Transverse colon (tissue), 4 donors: ENCODE measurements at regions of chr2 and their contacts with region 1.

Region 1: DNA sequence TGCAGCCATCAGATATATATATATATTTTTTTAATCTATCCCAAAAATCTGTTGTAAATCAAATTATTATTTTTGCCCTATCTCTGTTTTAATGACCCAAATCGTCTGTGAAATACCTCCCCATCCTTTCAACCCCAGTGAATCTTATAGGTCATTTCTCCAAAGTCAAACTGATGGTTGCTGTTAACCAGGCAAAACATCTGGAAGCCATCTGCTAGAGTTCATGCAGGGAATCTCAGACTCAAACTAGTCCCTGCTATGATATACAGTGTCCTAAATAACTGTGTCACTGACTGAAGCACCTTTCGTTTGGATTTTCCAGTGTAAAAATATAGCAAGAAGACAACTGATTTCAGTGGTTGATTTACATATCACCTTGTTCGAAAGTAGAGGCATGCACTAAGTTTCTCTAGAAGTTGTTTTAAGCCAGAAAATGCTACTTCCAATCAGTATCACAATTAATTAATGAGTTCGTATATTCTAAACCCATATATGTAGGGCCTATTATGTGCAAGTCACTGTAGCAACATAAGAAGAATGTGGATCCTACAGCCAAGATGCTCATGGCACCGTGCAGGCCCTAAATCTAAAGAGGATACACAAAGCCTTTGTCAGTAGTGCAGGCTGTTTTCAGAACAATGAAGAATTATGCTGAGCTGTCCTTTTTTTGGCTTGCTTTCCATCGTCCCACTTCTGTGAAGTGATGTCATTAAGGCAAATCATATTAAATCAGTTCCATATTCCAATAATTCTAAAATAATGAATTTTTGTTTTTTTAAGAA is 566.0 kb downstream of the STK39 start:
- DNase-seq: no peak
- H3K4me3 ChIP-seq: no peak overlapping the region
- H3K27ac ChIP-seq: no peak overlapping the region
- H3K4me1 ChIP-seq: no peaks in the 10 kb centered on the region
- H3K27me3 ChIP-seq: no peaks in the 10 kb centered on the region
- CTCF ChIP-seq: no peak
- EP300 ChIP-seq: no peak
- POLR2A ChIP-seq: no peak

Region 2: GRCh38 chr2:167697948-167698347 is 16.5 kb after region 1 on chr2:
- in situ Hi-C with region 1: no loop called
- intact Hi-C with region 1: loop called (anchors 2 kb)
- DNase-seq: no peak
- H3K4me3 ChIP-seq: no peak overlapping the region
- H3K27ac ChIP-seq: no peak overlapping the region
- H3K4me1 ChIP-seq: no peaks in the 10 kb centered on the region
- H3K27me3 ChIP-seq: no peaks in the 10 kb centered on the region
- CTCF ChIP-seq: no peak
- EP300 ChIP-seq: no peak
- POLR2A ChIP-seq: no peak

Region 3: DNA sequence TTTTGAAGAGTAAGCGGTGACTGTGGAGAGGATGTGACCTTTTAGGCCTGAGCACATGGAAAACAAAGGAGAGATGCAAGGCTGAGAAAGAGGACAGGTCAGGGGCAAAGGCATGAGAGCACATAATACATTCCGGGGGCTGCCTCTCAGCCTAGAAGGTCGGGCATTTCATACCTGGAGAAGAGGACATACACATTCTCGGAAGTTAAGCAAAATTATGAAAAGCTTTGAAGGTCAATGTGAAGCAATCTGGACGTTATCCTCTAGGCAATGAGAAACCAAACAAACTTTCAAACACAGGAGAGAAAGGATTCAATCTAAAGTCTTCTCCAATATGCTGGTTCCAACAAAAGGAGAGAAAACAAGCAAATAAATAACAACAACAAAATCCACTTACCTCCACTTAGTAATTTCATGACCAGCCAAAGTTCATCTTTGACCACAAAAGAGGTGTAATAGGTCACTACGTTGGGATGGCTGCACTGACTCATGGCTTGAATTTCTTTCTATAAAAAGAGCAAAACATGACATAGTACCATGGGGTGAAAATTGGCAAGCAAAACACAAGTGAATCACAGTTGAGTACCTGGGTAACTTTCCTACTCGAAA is 485.6 kb after region 1 on chr2:
- in situ Hi-C with region 1: no loop called
- intact Hi-C with region 1: no loop called
- DNase-seq: no peak
- H3K4me3 ChIP-seq: no peak overlapping the region
- H3K27ac ChIP-seq: no peak overlapping the region
- H3K4me1 ChIP-seq: no peaks in the 10 kb centered on the region
- H3K27me3 ChIP-seq: no peaks in the 10 kb centered on the region
- CTCF ChIP-seq: no peak
- EP300 ChIP-seq: no peak
- POLR2A ChIP-seq: no peak